ENCODE measurements at regions of chr14 and their contacts with region 1.

Region 1: GRCh38 chr14:33839193-33840076 is 111.4 kb downstream of the EGLN3 start:
- DNase-seq: peak in 1 of 2 donors; percentile 75
- H3K4me3 ChIP-seq: no peak overlapping the region
- H3K27ac ChIP-seq: no peak overlapping the region
- H3K4me1 ChIP-seq: peaks cover 0 to 4% of the 10 kb centered on the region in 2 donors
- H3K27me3 ChIP-seq: no peaks in the 10 kb centered on the region
- CTCF ChIP-seq: peak; percentile 75 to 84 (median 79)

Region 2: DNA sequence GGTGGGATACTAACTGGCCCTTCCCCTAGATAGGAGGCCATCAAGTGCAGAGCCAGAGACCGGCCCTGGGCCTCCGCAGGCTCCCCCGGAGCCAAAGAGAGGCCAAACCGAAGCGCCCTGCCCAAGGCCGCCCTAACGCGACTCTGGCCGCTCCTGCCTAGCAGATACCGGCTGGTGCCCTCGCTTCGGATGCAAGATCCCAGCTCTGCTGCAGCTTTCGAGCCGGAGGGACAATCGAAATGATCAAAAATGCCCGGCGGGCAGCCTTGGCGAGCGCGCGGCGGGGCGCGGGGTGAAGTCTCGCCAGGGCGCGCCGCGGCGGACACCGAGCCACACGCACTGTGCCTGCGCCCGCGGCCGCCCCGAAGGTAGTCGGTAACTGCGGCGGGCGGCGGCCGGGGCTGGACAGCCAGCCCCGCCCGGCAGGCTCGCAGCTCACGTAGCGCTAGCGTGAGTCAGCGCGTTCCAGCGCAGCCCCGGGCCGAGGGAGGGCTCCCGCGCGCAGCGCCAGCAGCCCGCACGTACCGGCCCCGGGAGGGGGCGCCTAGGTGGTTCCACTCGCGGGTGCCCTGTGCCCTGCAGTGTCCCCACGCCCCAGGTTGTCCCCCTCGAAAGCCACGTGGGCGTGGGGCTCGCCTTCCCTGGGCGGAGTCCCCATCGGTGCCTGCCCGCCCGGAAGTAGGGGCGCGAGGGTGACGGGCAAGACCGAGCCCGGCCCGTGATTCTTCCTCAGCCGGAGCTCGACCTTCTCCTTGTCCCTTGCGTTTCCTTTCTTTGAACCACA is 220.6 kb after region 1 on chr14:
- intact Hi-C with region 1: no loop called
- DNase-seq: peak; percentile 21 to 88
- H3K4me3 ChIP-seq: peak overlapping the region; percentile 76 to 85
- H3K27ac ChIP-seq: peak overlapping the region; percentile 92 to 95
- H3K4me1 ChIP-seq: peaks cover 0 to 7% of the 10 kb centered on the region in 2 donors
- H3K27me3 ChIP-seq: no peaks in the 10 kb centered on the region
- CTCF ChIP-seq: peak in 2 of 3 experiments; percentile 34 to 35

Region 3: GRCh38 chr14:34098045-34098984 is 258.9 kb after region 1 on chr14:
- intact Hi-C with region 1: loop called (anchors 1 kb)
- DNase-seq: no peak
- H3K4me3 ChIP-seq: no peak overlapping the region
- H3K27ac ChIP-seq: no peak overlapping the region
- H3K4me1 ChIP-seq: no peaks in the 10 kb centered on the region
- H3K27me3 ChIP-seq: no peaks in the 10 kb centered on the region
- CTCF ChIP-seq: peak; percentile 56 to 68 (median 59)

Region 4: DNA sequence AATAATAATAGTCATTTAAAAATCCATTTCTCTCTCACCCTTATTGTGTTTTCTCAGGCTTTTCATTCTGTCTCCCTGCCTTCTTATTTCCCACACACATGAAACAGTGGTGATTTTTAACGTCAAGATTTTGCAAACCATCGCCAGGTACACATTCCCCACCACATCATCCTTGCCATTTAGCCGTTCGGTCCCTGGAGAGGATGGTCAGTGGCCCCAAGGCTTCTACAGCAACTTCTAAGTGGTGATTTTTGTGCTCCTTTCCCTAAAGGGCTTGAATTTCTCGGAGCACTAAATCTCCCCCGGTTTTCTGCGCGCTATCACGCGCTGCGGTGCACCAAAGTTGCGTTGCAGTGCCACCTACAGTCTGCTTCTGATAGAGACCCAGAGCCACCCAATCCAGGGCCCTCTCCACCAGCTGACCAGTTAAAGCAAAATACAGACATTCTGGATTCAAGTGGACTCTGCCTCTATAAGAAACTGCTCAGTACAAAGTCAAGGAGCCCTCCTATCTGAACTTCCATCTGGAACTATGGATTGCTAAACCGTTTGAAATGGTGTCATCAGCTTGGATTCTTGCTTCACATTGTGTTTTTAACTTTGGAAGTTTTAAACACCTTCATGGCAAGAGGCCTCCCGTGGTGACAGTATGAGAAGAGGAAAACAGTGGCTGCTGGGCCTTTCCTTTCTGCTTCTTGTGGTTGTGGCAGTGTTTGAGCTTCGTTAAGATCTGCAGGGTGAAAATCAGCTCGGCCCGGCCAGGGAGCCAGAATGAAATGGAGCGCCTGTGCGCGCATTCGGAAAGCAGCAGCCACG is 388.6 kb after region 1 on chr14:
- intact Hi-C with region 1: loop called (anchors 1 kb)
- DNase-seq: peak in 1 of 2 donors; percentile 68
- H3K4me3 ChIP-seq: peak overlapping the region in 1 of 2 donors; percentile 50
- H3K27ac ChIP-seq: no peak overlapping the region
- H3K4me1 ChIP-seq: no peaks in the 10 kb centered on the region
- H3K27me3 ChIP-seq: no peaks in the 10 kb centered on the region
- CTCF ChIP-seq: peak; percentile 56 to 79 (median 74)

Region 5: DNA sequence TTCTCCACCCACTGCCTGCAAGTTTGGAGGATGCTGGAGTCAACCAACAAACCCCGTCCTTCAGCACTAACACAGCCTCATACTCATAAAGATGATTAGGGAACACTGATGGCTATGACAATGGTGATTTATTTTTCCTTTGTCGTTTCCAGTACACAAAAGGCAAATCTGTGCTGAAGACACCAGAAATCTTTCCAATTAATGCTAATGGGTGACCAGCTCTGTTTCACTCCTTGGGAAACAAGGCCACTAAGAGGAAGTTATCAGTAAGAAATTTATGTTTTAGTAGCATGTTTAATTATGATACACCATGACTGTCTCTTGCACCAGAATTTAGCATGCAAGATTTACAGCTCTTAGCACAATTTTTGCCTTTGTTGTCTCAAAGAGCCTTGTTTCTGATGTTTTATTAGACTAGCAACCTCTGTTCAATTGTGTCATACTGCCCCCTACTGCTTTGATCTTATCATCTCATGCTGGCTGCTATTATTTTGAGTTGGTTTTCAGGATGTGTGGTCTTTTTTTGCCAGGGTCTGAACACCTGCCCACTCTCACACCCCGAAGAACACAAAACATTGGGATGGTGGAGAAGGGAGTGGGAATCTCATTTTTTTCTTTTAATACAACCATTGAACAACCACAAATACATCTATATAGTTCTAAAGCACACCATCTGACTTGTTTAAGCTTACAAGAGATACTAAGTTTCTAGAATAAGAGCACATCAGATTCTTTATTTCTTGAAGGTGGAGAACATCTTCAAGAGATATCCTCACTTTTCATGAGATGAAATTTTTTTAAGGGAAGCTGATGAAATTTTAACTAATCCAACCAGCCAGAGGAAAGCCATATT is 461.7 kb after region 1 on chr14:
- intact Hi-C with region 1: loop called (anchors 10 kb)
- DNase-seq: no peak
- H3K4me3 ChIP-seq: no peak overlapping the region
- H3K27ac ChIP-seq: no peak overlapping the region
- H3K4me1 ChIP-seq: no peaks in the 10 kb centered on the region
- H3K27me3 ChIP-seq: no peaks in the 10 kb centered on the region
- CTCF ChIP-seq: peak in 2 of 3 experiments; percentile 35 to 41

Region 6: GRCh38 chr14:34322940-34323418 is 483.5 kb after region 1 on chr14:
- intact Hi-C with region 1: loop called (anchors 10 kb)
- DNase-seq: no peak
- H3K4me3 ChIP-seq: no peak overlapping the region
- H3K27ac ChIP-seq: no peak overlapping the region
- H3K4me1 ChIP-seq: no peaks in the 10 kb centered on the region
- H3K27me3 ChIP-seq: no peaks in the 10 kb centered on the region
- CTCF ChIP-seq: peak; percentile 37 to 50 (median 37)

Measured in ascending aorta (tissue), 2 donors.